ENCODE measurements at regions of chr7 and their contacts with region 1.

Region 1: GRCh38 chr7:18570890-18571478 is 75.4 kb downstream of the HDAC9 start:
- DNase-seq: no peak
- H3K4me3 ChIP-seq: no peak overlapping the region
- CTCF ChIP-seq: peak; percentile 19

Region 2: GRCh38 chr7:18053177-18053928 is 517.6 kb before region 1 on chr7:
- CTCF ChIA-PET with region 1: no interaction called
- POLR2A ChIA-PET with region 1: no interaction called
- DNase-seq: no peak
- H3K4me3 ChIP-seq: no peak overlapping the region
- CTCF ChIP-seq: no peak

Region 3: DNA sequence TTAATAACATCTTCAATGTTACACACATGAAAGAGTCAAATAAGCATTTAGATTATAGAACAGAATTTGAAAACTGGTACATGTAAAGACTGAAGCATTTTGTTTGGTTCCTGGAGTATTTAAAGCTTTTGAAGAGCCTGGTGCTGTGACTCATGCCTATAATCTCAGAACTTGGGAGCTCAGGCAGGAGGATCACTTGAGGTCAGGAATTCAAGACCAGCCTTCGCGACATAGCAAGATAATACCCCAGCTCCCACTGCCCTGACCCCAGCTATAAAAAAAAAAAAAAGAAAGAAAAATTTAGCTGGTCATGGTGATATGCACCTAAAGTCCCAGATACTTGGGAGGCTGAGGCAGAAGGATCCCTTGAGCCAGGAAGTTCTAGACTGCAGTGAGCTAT is 12.3 kb after region 1 on chr7:
- CTCF ChIA-PET with region 1: interaction called, 19 read pairs
- POLR2A ChIA-PET with region 1: no interaction called
- DNase-seq: peak; percentile 40
- H3K4me3 ChIP-seq: no peak overlapping the region
- CTCF ChIP-seq: no peak

Measured in AG04449 (cell line).